H1 (cell line): ENCODE measurements at regions of chr1 and their contacts with region 1.

Region 1: DNA sequence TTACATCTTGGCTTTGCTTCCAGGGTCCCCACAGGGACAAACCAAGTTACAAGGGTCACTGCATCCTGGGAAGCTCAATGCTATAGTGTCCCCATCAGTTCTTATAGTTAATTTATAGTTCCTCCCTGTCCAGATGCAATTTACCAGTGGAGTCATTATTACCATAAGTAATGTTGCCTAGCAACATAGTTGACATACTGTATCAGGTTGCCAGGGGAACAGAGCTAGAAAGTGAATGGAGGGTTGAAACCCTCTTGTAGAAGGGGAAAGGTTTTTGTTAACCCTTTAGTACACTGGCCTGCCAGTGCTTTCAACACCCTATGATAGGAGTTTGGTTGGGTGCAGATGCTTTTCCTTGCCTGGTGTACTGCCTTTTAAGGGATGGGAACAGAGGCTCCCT is 34.3 kb upstream of the TTC4 start:
- DNase-seq: no peak
- H3K4me3 ChIP-seq: no peak overlapping the region
- H3K27ac ChIP-seq: no peak overlapping the region
- H3K4me1 ChIP-seq: peaks cover 0 to 9% (median 3%) of the 10 kb centered on the region in 4 experiments; a peak in 3 of 7 replicates
- H3K27me3 ChIP-seq: no peaks in the 10 kb centered on the region
- CTCF ChIP-seq: no peak
- EP300 ChIP-seq: no peak
- POLR2A ChIP-seq: no peak
- RAD21 ChIP-seq: no peak

Region 2: GRCh38 chr1:54429179-54429520 is 252.2 kb before region 1 on chr1:
- CTCF ChIA-PET with region 1: no interaction called
- POLR2A ChIA-PET with region 1: no interaction called
- DNase-seq: no peak
- H3K4me3 ChIP-seq: no peak overlapping the region
- H3K27ac ChIP-seq: no peak overlapping the region
- H3K4me1 ChIP-seq: no peaks in the 10 kb centered on the region
- H3K27me3 ChIP-seq: no peaks in the 10 kb centered on the region
- CTCF ChIP-seq: no peak
- EP300 ChIP-seq: no peak
- POLR2A ChIP-seq: no peak
- RAD21 ChIP-seq: no peak

Region 3: DNA sequence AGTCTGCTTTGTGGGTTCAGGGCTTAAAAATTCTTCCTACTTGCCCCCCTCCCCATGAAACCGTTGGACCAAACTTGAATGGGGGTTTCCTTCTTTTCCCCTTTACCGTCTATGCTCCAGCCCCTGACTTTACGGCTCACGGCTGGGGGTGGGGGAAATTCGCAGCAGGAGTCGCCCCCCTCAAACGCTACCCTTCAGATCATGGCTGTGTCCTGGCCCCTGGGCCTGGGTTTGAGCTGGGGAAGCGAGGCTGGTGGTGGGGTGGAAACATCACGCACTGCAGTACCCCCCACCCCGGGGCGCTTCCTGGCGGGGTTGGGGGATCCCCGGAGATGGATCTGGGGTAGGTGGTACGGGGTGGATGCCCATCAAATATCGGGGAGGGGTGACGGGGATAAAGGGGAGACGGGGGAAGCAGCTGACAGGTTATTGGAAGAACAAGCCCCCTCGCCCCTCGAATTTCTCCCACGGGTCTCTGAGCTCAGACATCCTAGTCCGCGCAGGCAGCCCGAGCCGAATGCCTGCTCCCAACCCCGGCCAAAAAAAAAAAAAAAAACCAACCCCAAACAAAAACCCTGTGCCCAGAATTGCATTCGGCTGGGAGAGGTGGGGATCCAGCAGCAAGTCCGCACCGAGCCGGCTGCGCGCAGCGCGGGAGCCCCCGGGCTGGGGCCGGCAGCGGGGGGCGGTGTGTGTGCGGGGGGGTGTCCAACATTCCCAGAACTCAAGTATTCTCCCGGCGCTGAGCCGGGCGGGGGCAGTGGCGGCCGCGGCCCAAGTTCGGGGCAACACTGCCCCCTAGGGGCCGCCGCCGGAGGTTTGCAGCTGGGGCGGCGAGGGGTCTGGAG is 192.4 kb before region 1 on chr1:
- CTCF ChIA-PET with region 1: no interaction called
- POLR2A ChIA-PET with region 1: no interaction called
- DNase-seq: peak; percentile 74 to 96
- H3K4me3 ChIP-seq: peak overlapping the region; percentile 24 to 69 (median 64); a peak in 7 of 8 replicates
- H3K27ac ChIP-seq: peak overlapping the region; percentile 96
- H3K4me1 ChIP-seq: peaks cover 7 to 22% (median 15%) of the 10 kb centered on the region in 4 experiments
- H3K27me3 ChIP-seq: peaks cover 0 to 18% (median 11%) of the 10 kb centered on the region in 4 experiments; a peak in 6 of 7 replicates
- CTCF ChIP-seq: peak; percentile 75 to 96 (median 79)
- EP300 ChIP-seq: peak in 1 of 2 experiments; percentile 84; a peak in 1 of 3 replicates
- POLR2A ChIP-seq: peak in 1 of 2 experiments; percentile 47; a peak in 1 of 3 replicates
- RAD21 ChIP-seq: peak; percentile 88 to 90

Region 4: GRCh38 chr1:54663725-54664124 is 17.6 kb before region 1 on chr1:
- CTCF ChIA-PET with region 1: interaction called, 33 read pairs
- POLR2A ChIA-PET with region 1: no interaction called
- DNase-seq: no peak
- H3K4me3 ChIP-seq: no peak overlapping the region
- H3K27ac ChIP-seq: no peak overlapping the region
- H3K4me1 ChIP-seq: no peaks in the 10 kb centered on the region
- H3K27me3 ChIP-seq: no peaks in the 10 kb centered on the region
- CTCF ChIP-seq: no peak
- EP300 ChIP-seq: no peak
- POLR2A ChIP-seq: no peak
- RAD21 ChIP-seq: peak; percentile 37 to 46